Activated CD4-positive, alpha-beta memory T cell treated with anti-CD3 and anti-CD28 coated beads for 36 hours (primary cell): ENCODE measurements at regions of chr17 and their contacts with region 1.

Region 1: GRCh38 chr17:28763804-28764266 is 20.0 kb downstream of the TRAF4 start:
- DNase-seq: peak; percentile 84
- H3K4me3 Mint-ChIP-seq: no peak overlapping the region
- H3K27ac Mint-ChIP-seq: peak overlapping the region; percentile 73
- H3K4me1 Mint-ChIP-seq: peaks cover 23% of the 10 kb centered on the region
- H3K27me3 Mint-ChIP-seq: no peaks in the 10 kb centered on the region

Region 2: GRCh38 chr17:28661635-28662537 is 101.9 kb before region 1 on chr17 and contains the starts of genes SDF2 and SUPT6H:
- CTCF ChIA-PET with region 1: no interaction called
- POLR2A ChIA-PET with region 1: no interaction called
- intact Hi-C with region 1: no loop called
- DNase-seq: peak; percentile 97
- H3K4me3 Mint-ChIP-seq: peak within 1 kb of the TSS; percentile 97
- H3K27ac Mint-ChIP-seq: peak within 1 kb of the TSS; percentile 97
- H3K4me1 Mint-ChIP-seq: peaks cover 43% of the 10 kb centered on the region
- H3K27me3 Mint-ChIP-seq: no peaks in the 10 kb centered on the region
- total RNA-seq, gene SDF2: 38.4 to 43.5 TPM
- total RNA-seq, gene SUPT6H: 59.4 to 65.9 TPM

Region 3: GRCh38 chr17:28750178-28751047 is 13.4 kb before region 1 on chr17:
- CTCF ChIA-PET with region 1: interaction called, 122 read pairs
- POLR2A ChIA-PET with region 1: interaction called, 8 read pairs
- intact Hi-C with region 1: no loop called
- DNase-seq: peak; percentile 94
- H3K4me3 Mint-ChIP-seq: no peak overlapping the region
- H3K27ac Mint-ChIP-seq: peak overlapping the region; percentile 42
- H3K4me1 Mint-ChIP-seq: peaks cover 26% of the 10 kb centered on the region
- H3K27me3 Mint-ChIP-seq: no peaks in the 10 kb centered on the region

Region 4: DNA sequence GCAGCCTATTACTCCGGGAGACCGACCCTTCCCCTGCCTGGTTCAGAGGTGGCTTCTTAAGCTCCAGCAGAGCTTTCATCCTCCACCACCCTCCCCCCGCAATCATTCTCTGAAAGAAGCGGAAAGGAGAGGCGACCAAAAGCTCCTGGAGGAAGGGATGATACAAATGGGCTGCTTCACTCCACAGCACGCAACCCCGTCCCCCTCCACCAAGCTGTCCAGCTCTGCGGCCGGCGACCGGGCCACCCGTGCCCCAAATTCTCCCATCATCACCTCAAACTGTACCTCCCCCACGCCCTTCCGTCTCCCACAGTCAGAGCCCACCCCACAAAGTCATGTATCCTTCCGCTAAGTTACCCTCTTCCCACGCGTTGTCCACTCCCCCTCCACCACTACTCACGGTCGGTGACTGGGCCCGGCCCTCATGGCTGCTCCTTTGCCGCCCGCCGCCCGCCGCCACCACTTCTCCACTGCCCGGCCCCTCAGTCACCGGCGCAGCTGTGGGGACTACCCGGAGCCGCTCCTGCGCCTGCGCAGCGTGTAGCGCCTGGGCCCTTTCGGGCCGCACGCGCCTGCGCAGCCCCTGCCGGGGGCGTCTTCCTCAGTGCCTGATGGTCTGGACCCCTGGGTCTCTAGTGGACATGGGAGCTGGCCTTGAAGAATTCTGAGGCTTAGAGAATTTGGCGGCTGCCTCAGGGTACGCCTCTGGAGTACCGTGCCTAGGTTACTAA is 78.6 kb after region 1 on chr17 and contains the start of gene FAM222B:
- CTCF ChIA-PET with region 1: interaction called, 40 read pairs
- POLR2A ChIA-PET with region 1: interaction called, 10 read pairs
- intact Hi-C with region 1: loop called (anchors 1 kb)
- DNase-seq: peak; percentile 91
- H3K4me3 Mint-ChIP-seq: peak within 1 kb of the TSS; percentile 95
- H3K27ac Mint-ChIP-seq: peak within 1 kb of the TSS; percentile 88
- H3K4me1 Mint-ChIP-seq: peaks cover 24% of the 10 kb centered on the region
- H3K27me3 Mint-ChIP-seq: no peaks in the 10 kb centered on the region
- total RNA-seq, gene FAM222B: 18.6 to 21.5 TPM

Region 5: GRCh38 chr17:28878981-28879380 is 115.1 kb after region 1 on chr17:
- CTCF ChIA-PET with region 1: interaction called, 12 read pairs
- POLR2A ChIA-PET with region 1: no interaction called
- intact Hi-C with region 1: no loop called
- DNase-seq: peak; percentile 39
- H3K4me3 Mint-ChIP-seq: no peak overlapping the region
- H3K27ac Mint-ChIP-seq: no peak overlapping the region
- H3K4me1 Mint-ChIP-seq: peaks cover 32% of the 10 kb centered on the region
- H3K27me3 Mint-ChIP-seq: no peaks in the 10 kb centered on the region

Region 6: DNA sequence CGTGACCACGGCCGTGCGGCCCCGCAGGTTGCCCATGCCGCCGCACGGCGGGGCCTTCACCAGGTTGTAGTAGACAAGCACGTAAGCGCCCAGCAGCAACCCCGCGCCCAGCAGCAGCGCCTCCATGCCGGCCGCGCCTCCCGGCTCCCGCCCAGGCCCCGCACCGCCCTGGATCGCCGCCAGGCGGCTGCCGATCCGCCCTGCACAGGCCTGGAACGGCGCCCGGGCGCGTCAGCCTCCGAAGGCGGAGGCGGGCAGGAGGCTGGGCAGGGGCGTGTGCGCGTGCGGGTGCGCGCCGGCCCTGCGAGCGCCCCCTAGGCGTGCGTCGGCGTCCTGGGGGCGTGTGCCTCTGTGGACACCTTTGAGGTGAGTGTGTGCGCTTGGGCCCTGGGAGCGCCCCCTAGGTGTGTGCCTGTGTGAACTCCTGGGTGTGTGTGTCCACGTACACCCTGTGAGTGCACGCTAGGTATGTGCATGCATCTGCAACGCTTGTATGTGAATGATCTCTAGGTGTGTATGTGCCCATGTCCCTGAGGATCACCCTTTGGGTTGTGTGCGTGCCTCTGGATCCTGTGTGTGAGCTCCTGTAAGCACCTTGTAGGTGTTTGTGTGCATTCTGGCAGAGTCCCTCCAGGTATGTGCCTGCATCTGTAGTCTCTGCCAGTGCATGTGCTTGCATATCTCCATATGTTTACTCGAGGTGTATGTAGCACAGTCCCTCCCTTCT is 139.1 kb after region 1 on chr17 and contains the start of gene DHRS13:
- CTCF ChIA-PET with region 1: interaction called, 22 read pairs
- POLR2A ChIA-PET with region 1: no interaction called
- intact Hi-C with region 1: loop called (anchors 5 kb)
- DNase-seq: peak; percentile 94
- H3K4me3 Mint-ChIP-seq: peak within 1 kb of the TSS; percentile 97
- H3K27ac Mint-ChIP-seq: peak within 1 kb of the TSS; percentile 89
- H3K4me1 Mint-ChIP-seq: peaks cover 27% of the 10 kb centered on the region
- H3K27me3 Mint-ChIP-seq: no peaks in the 10 kb centered on the region
- total RNA-seq, gene DHRS13: 18.0 to 20.6 TPM

Region 7: GRCh38 chr17:28946239-28946638 is 182.4 kb after region 1 on chr17:
- CTCF ChIA-PET with region 1: interaction called, 10 read pairs
- POLR2A ChIA-PET with region 1: no interaction called
- intact Hi-C with region 1: no loop called
- DNase-seq: no peak
- H3K4me3 Mint-ChIP-seq: peak overlapping the region; percentile 36
- H3K27ac Mint-ChIP-seq: peak overlapping the region; percentile 68
- H3K4me1 Mint-ChIP-seq: peaks cover 68% of the 10 kb centered on the region
- H3K27me3 Mint-ChIP-seq: no peaks in the 10 kb centered on the region